ENCODE measurements at regions of chr7 and their contacts with region 1.

Region 1: DNA sequence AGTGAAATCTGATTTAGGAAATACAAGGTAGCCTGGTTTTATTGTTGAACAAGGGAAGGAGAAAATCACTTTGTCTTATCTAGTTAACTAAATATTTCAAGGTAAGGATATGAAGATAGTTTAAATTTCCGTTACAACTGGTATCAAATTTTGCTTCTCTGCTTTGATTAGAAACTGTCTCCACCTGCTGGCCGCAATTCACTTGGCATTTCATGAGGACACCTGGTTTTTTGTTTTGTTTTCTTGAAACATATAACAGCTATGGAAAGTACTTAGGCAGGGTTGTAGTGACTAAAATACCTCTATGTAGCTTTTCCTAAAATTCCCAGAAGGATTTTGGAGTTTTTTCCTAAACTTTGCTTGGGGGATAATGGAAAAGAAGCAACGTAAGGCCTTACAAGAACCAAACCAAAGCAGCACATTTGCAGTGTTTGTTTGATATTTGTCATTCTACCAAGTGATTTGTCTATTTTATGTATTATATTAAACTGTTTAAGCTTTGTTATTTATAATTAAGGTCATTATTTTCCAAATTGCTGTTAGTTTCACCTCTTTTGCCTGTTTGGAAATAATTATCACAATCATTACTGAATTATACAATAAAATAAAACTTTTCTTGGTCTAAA is 73.6 kb downstream of the AHCYL2 start:
- DNase-seq: peak; percentile 62
- CTCF ChIP-seq: peak; percentile 74

Region 2: GRCh38 chr7:127532151-127532550 is 1766.2 kb before region 1 on chr7:
- CTCF ChIA-PET with region 1: no interaction called
- POLR2A ChIA-PET with region 1: no interaction called
- DNase-seq: no peak
- CTCF ChIP-seq: no peak

Region 3: GRCh38 chr7:129285111-129285510 is 13.3 kb before region 1 on chr7:
- CTCF ChIA-PET with region 1: interaction called, 18 read pairs
- POLR2A ChIA-PET with region 1: no interaction called
- DNase-seq: no peak
- CTCF ChIP-seq: no peak

Region 4: GRCh38 chr7:129958643-129959470 is 660.5 kb after region 1 on chr7:
- CTCF ChIA-PET with region 1: no interaction called
- POLR2A ChIA-PET with region 1: no interaction called
- DNase-seq: no peak
- CTCF ChIP-seq: no peak